PC-9 (cell line): ENCODE measurements at regions of chr12 and their contacts with region 1.

Region 1: DNA sequence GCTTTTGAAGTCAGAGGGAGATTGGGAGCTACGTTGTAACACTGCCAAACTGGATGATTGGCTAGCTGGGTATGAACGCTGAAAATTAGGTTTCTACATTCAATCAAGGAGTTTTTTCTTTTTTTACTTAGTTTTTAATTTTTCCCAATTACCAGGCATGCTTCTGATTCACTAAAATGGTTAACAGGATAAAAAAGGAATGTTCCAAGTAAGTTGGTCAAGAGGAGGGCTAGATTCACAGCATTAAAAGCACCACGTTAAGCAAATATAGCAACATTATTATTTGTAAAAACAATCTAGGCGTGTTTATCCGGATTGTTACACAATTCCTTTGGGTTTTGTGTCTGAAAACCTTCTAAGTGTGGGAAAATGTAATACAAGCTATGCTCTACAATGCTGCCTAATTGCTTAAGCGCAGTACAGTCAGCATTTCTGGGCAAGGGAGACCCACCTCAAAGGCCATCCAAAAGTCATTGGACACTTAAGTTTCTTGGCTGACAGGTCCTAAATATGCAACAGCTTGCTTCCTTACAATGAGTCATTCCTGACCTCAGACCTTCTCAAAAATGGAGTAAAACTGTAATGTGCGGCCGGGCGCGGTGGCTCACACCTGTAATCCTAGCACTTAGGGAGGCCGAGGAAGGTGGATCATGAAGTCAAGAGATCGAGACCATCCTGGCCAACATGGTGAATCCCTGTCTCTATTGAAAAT is 1.2 kb downstream of the RPLP0 start:
- DNase-seq: peak; percentile 23 to 63
- H3K4me3 ChIP-seq: peak overlapping the region; percentile 64
- H3K27ac ChIP-seq: peak overlapping the region; percentile 93
- H3K4me1 ChIP-seq: peaks cover 46% of the 10 kb centered on the region
- H3K27me3 ChIP-seq: no peaks in the 10 kb centered on the region
- CTCF ChIP-seq: no peak

Region 2: GRCh38 chr12:119938049-119938667 is 261.6 kb before region 1 on chr12:
- CTCF ChIA-PET with region 1: no interaction called
- POLR2A ChIA-PET with region 1: no interaction called
- intact Hi-C with region 1: no loop called
- DNase-seq: peak in 1 of 2 experiments; percentile 53
- H3K4me3 ChIP-seq: no peak overlapping the region
- H3K27ac ChIP-seq: no peak overlapping the region
- H3K4me1 ChIP-seq: peaks cover 7% of the 10 kb centered on the region
- H3K27me3 ChIP-seq: no peaks in the 10 kb centered on the region
- CTCF ChIP-seq: peak; percentile 81

Region 3: GRCh38 chr12:120142231-120142877 is 57.4 kb before region 1 on chr12:
- CTCF ChIA-PET with region 1: no interaction called
- POLR2A ChIA-PET with region 1: no interaction called
- intact Hi-C with region 1: no loop called
- DNase-seq: no peak
- H3K4me3 ChIP-seq: no peak overlapping the region
- H3K27ac ChIP-seq: no peak overlapping the region
- H3K4me1 ChIP-seq: no peaks in the 10 kb centered on the region
- H3K27me3 ChIP-seq: no peaks in the 10 kb centered on the region
- CTCF ChIP-seq: no peak

Region 4: GRCh38 chr12:120228291-120229070 is 28.7 kb after region 1 on chr12:
- CTCF ChIA-PET with region 1: interaction called, 8 read pairs
- POLR2A ChIA-PET with region 1: interaction called, 25 read pairs
- intact Hi-C with region 1: loop called (anchors 2 kb)
- DNase-seq: peak; percentile 80 to 92
- H3K4me3 ChIP-seq: peak overlapping the region; percentile 54; the same call in 1 of the 2 replicates
- H3K27ac ChIP-seq: peak overlapping the region; percentile 99
- H3K4me1 ChIP-seq: peaks cover 53% of the 10 kb centered on the region
- H3K27me3 ChIP-seq: no peaks in the 10 kb centered on the region
- CTCF ChIP-seq: peak; percentile 81

Region 5: DNA sequence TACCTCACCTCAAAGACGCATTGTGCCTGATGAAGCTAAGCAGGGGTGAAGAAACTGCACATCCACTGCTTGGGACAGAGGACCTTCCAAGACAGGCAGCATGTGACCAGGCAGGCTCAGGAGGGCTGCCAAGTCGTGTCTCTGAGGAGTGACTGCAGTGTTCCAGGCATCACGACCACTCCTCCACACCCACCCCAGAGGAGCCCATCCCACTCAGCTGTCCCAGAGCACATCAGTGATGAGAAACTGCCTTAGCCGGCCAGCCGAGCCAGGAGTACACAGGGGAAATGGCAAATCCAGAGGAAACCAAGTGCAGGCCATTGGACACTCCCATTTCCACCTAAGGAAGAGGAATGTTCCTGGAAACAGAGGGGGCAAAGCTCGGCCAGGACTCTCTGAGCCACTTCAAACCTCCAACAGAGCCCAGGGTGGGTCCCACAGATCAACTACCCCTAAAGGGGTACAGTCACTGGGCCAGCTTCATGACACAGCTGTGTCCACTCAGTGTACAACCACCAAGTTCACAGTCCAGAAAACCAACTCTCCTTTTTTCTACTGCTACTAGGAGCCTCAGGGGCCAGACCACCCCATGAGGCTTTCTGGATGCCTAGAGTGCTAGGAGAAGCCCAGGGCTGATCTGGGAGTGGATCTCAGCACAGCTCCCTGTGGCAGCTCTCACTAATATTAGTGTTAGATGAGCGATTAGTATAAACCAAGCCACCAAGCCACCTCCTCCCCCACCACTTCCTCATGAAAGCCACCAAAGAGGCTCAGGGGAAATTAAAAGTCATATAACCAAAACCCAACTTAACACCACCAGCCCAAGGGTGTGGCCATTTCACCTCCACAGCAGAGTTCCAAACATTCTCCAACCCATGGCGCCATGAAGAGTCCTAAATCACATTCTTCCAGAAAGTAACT is 50.4 kb after region 1 on chr12:
- CTCF ChIA-PET with region 1: no interaction called
- POLR2A ChIA-PET with region 1: interaction called, 14 read pairs
- intact Hi-C with region 1: no loop called
- DNase-seq: no peak
- H3K4me3 ChIP-seq: no peak overlapping the region
- H3K27ac ChIP-seq: no peak overlapping the region
- H3K4me1 ChIP-seq: peaks cover 12% of the 10 kb centered on the region
- H3K27me3 ChIP-seq: no peaks in the 10 kb centered on the region
- CTCF ChIP-seq: no peak

Region 6: DNA sequence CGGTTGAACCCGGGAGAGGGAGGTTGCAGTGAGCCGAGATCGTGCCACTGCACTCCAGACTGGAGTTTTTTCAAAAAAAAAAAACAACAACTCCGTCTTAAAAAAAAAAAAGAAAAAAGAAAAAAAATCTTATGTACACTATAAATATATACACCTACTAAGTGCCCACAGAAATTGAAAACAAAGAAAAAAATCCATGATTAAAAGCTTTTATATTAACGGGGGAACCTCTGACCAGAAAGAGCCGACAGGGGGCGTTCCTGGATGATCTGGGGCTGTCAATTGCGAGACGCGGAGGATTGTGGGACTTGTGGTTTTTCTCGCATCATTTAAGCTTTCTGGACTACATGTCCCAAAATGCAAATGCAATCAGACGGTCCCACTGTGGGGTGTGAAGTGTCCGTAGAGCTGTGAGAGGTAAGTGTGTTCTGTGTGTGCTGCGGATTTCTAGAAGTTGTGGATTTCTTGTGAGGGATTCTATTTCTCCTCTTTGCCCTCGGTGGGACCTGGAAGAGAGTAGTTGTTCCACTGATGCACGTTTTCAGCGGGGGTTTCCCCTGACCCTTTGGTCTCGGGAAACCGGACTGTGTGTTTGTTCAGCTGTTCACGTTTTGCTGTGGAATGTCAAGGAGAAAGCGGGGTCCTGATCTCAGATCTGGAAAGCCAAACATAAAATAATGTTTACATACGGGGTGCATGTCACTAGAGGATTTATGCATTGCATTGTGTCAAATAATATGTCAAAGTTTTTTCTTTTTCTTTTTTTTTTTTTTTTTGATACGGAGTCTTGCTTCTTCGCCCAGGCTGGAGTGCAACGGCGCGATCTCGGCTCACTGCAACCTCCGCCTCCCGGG is 102.4 kb after region 1 on chr12 and contains the start of gene SIRT4:
- CTCF ChIA-PET with region 1: interaction called, 4 read pairs
- POLR2A ChIA-PET with region 1: interaction called, 17 read pairs
- intact Hi-C with region 1: no loop called
- DNase-seq: peak; percentile 78 to 82
- H3K4me3 ChIP-seq: peak within 1 kb of the TSS; percentile 74
- H3K27ac ChIP-seq: no peak within 1 kb of the TSS
- H3K4me1 ChIP-seq: no peaks in the 10 kb centered on the region
- H3K27me3 ChIP-seq: no peaks in the 10 kb centered on the region
- CTCF ChIP-seq: peak; percentile 85
- total RNA-seq, gene SIRT4: 3.2 and 3.6 TPM in 2 replicates

Region 7: GRCh38 chr12:120865098-120865497 is 665.3 kb after region 1 on chr12:
- CTCF ChIA-PET with region 1: no interaction called
- POLR2A ChIA-PET with region 1: interaction called, 18 read pairs
- intact Hi-C with region 1: no loop called
- DNase-seq: no peak
- H3K4me3 ChIP-seq: no peak overlapping the region
- H3K27ac ChIP-seq: no peak overlapping the region
- H3K4me1 ChIP-seq: no peaks in the 10 kb centered on the region
- H3K27me3 ChIP-seq: no peaks in the 10 kb centered on the region
- CTCF ChIP-seq: no peak